Activated naive CD4-positive, alpha-beta T cell treated with anti-CD3 and anti-CD28 coated beads for 36 hours (primary cell): ENCODE measurements at regions of chr1 and their contacts with region 1.

Region 1: GRCh38 chr1:75615613-75616435 is 4.9 kb upstream of the SLC44A5 start:
- DNase-seq: peak; percentile 30
- H3K4me3 Mint-ChIP-seq: peak overlapping the region; percentile 69
- H3K27ac Mint-ChIP-seq: no peak overlapping the region
- H3K4me1 Mint-ChIP-seq: peaks cover 16% of the 10 kb centered on the region
- H3K27me3 Mint-ChIP-seq: peaks cover 74% of the 10 kb centered on the region

Region 2: DNA sequence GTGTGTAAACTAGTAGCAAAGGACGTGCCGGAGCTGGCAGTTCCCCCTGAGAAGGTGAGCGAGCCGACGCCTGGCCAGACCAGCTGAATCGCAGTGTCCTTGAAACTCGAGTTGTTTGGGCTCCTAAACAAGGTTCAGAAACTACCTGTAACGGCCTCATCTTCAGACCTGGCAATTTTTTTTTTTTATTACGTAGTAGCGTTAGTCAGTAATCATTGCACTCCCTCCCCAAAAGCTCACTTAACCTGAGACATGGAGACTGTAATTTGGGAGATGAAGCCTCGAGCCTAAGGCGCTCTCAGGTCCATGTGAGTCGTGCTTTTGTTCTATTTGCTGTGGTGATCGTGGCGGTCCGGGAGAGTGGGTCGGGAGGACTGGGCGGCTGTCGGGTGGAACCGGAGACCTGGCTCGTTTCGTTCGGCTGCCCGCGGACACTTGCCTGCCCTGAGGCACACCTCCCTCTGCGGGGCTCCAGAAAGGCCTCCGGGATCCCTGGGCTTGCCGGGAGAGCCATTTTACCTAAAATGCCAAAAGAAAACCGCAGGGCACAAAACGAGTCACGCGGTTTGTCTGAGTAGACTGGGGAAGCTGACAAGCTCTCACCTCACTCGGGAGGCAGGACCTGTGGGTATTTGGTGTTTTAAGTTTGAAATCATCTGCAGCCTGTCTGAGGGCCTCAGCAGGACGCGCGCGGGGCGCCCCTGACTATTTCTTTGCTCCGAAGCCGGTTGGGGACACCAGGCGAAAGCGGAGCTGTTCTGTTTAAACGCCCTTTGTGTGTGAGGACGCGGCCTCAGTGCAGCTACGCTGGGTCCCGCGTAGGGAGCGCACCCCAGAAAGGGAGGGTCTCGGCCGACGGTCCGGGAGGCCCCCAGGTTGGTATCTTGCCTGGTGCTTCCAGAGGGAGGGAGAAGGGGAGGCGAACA is 480.9 kb before region 1 on chr1:
- CTCF ChIA-PET with region 1: no interaction called
- intact Hi-C with region 1: loop called (anchors 10 kb)
- DNase-seq: peak; percentile 39
- H3K4me3 Mint-ChIP-seq: peak overlapping the region; percentile 69
- H3K27ac Mint-ChIP-seq: no peak overlapping the region
- H3K4me1 Mint-ChIP-seq: peaks cover 23% of the 10 kb centered on the region
- H3K27me3 Mint-ChIP-seq: peaks cover 72% of the 10 kb centered on the region